Esophagus muscularis mucosa (tissue), 4 donors: ENCODE measurements at regions of chr2 and their contacts with region 1.

Region 1: DNA sequence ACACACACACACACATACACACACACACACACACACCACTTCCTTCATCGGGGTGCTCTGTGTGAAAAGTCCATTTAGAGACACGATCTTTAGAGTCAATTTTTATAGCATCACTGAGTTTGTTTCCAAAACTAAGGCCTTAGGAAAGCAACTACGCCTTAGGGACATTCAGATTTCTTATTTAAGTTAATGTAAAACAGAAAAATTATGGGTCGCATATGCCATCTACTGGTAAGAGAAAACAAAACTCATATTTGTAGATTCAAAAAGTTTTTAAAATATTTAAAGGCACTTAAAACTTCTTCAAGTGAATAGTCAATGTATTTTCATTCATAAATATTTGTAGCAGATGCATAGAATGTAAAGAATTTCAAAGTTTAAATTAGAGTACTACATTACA is 166.2 kb downstream of the ATAD2B start:
- DNase-seq: no peak
- H3K4me3 ChIP-seq: no peak overlapping the region
- H3K27ac ChIP-seq: no peak overlapping the region
- H3K4me1 ChIP-seq: peaks cover under 1 to 21% (median 4%) of the 10 kb centered on the region in 4 donors
- H3K27me3 ChIP-seq: no peaks in the 10 kb centered on the region
- CTCF ChIP-seq: peak; percentile 37 to 47 (median 42)
- EP300 ChIP-seq: no peak
- POLR2A ChIP-seq: no peak

Region 2: DNA sequence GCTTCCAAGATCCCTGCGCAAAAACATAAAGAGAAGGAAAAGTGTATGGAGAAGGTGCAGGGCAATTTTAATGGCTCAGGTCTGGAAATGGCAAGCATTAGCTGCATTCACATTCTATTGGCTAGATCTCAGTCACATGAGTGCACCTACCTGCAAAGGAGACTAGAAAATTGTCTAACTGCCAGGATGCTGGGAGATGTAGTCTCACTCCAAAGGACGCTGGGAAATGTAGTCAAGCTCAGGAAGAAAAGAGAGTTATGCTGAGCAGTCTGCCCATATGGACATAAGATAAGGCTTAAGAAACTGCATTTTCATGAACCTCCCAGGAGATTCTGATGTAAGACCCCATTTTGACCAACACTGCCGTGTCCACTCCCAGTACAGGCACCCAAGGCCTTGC is 385.3 kb before region 1 on chr2:
- intact Hi-C with region 1: loop called (anchors 5 kb)
- DNase-seq: no peak
- H3K4me3 ChIP-seq: no peak overlapping the region
- H3K27ac ChIP-seq: no peak overlapping the region
- H3K4me1 ChIP-seq: peaks cover 0 to under 1% (median 0%) of the 10 kb centered on the region in 4 donors
- H3K27me3 ChIP-seq: no peaks in the 10 kb centered on the region
- CTCF ChIP-seq: no peak
- EP300 ChIP-seq: no peak
- POLR2A ChIP-seq: no peak

Region 3: GRCh38 chr2:23636426-23636825 is 124.3 kb before region 1 on chr2:
- intact Hi-C with region 1: loop called (anchors 10 kb)
- DNase-seq: no peak
- H3K4me3 ChIP-seq: no peak overlapping the region
- H3K27ac ChIP-seq: peak overlapping the region; percentile 47 to 58 (median 55)
- H3K4me1 ChIP-seq: peaks cover 14 to 23% (median 20%) of the 10 kb centered on the region in 4 donors
- H3K27me3 ChIP-seq: no peaks in the 10 kb centered on the region
- CTCF ChIP-seq: peak; percentile 17 to 40 (median 39)
- EP300 ChIP-seq: no peak
- POLR2A ChIP-seq: no peak